Body of pancreas (tissue), 4 donors: ENCODE measurements at regions of chr4 and their contacts with region 1.

Region 1: GRCh38 chr4:123399627-123400358 is 3.2 kb downstream of the SPRY1 start:
- DNase-seq: peak in 2 of 4 donors; percentile 17 to 46
- ATAC-seq: no peak
- H3K4me3 ChIP-seq: peak overlapping the region; percentile 38 to 76
- H3K27ac ChIP-seq: peak overlapping the region; percentile 91 to 97 (median 94)
- H3K4me1 ChIP-seq: peaks cover 8% of the 10 kb centered on the region
- H3K27me3 ChIP-seq: no peaks in the 10 kb centered on the region
- CTCF ChIP-seq: no peak
- POLR2A ChIP-seq: no peak

Region 2: GRCh38 chr4:123127218-123127617 is 272.6 kb before region 1 on chr4:
- intact Hi-C with region 1: no loop called
- DNase-seq: no peak
- ATAC-seq: no peak
- H3K4me3 ChIP-seq: no peak overlapping the region
- H3K27ac ChIP-seq: no peak overlapping the region
- H3K4me1 ChIP-seq: no peaks in the 10 kb centered on the region
- H3K27me3 ChIP-seq: no peaks in the 10 kb centered on the region
- CTCF ChIP-seq: peak in 2 of 7 experiments; percentile 16 to 19
- POLR2A ChIP-seq: no peak

Region 3: GRCh38 chr4:123182289-123182688 is 217.5 kb before region 1 on chr4:
- intact Hi-C with region 1: no loop called
- DNase-seq: no peak
- ATAC-seq: no peak
- H3K4me3 ChIP-seq: no peak overlapping the region
- H3K27ac ChIP-seq: no peak overlapping the region
- H3K4me1 ChIP-seq: no peaks in the 10 kb centered on the region
- H3K27me3 ChIP-seq: no peaks in the 10 kb centered on the region
- CTCF ChIP-seq: no peak
- POLR2A ChIP-seq: no peak

Region 4: DNA sequence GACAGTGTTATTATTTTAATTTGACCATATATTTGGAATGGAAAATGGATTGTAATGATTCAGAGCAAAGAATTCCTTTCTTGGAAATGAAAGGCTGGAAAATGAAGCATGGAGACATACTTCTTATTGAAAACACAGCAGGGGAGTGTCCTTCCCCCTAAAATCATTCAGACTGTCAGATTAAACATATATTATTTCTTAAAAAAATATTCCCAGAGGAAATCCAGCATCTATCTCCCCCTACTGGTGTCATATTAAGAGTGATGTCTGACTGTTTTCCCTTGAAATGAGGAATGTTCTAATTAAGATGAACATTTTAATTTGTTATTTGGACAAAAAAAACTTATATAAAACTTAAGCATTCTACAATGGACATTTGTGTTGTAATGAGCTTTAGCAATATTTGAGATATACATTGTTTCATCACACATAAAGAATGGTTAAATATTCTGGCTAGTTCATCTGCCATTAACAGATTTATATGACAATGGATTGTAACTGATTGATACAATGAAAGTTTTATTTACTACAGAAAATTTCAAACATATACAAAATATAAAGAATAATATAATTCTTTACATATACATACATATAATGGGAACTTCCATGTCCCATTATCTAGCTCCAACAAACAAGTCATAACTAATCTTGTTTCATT is 261.4 kb after region 1 on chr4:
- intact Hi-C with region 1: loop called (anchors 10 kb)
- DNase-seq: no peak
- ATAC-seq: peak; percentile 40
- H3K4me3 ChIP-seq: no peak overlapping the region
- H3K27ac ChIP-seq: no peak overlapping the region
- H3K4me1 ChIP-seq: no peaks in the 10 kb centered on the region
- H3K27me3 ChIP-seq: no peaks in the 10 kb centered on the region
- CTCF ChIP-seq: peak in 6 of 7 experiments; percentile 38 to 64 (median 54)
- POLR2A ChIP-seq: no peak